ENCODE measurements at regions of chr1 and their contacts with region 1.

Region 1: DNA sequence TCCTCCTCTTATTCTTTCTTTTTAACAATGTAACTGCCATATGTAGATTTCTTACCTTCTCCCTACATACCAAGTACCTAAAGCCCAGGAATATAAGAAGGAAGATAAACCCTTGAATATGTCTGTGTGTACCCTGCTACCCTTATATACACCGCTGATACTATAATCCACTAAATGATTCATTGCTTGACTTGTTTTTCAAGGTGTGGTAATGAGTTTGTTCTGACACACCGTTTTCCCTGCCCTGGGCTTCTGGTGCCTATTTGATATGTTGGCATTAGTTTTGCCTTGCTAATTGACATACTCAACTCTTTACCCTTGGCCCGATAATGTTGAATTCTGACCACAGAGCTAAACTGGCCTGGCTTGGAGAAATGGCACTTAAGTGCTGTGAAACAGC is 64.3 kb downstream of the IL23R start:
- DNase-seq: no peak
- CTCF ChIP-seq: no peak

Region 2: DNA sequence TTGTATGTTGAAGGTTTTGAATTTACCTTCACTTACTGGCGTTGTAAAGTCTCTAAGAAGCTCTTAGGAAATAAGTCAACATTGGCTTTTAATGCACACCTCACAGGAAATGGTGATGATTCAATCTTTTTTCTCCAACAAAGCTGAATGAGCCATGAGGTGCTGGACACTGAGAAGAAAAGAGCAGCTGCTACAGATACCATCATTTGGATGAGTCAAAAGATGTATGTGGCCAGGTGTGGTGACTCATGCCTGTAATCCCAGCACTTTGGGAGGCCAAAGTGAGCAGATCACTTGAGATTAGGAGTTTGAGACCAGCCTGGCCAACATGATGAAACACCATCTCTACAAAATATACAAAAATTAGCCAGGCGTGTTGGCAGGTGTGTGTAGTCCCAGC is 67.6 kb before region 1 on chr1:
- in situ Hi-C with region 1: no loop called
- DNase-seq: no peak
- CTCF ChIP-seq: no peak

Region 3: DNA sequence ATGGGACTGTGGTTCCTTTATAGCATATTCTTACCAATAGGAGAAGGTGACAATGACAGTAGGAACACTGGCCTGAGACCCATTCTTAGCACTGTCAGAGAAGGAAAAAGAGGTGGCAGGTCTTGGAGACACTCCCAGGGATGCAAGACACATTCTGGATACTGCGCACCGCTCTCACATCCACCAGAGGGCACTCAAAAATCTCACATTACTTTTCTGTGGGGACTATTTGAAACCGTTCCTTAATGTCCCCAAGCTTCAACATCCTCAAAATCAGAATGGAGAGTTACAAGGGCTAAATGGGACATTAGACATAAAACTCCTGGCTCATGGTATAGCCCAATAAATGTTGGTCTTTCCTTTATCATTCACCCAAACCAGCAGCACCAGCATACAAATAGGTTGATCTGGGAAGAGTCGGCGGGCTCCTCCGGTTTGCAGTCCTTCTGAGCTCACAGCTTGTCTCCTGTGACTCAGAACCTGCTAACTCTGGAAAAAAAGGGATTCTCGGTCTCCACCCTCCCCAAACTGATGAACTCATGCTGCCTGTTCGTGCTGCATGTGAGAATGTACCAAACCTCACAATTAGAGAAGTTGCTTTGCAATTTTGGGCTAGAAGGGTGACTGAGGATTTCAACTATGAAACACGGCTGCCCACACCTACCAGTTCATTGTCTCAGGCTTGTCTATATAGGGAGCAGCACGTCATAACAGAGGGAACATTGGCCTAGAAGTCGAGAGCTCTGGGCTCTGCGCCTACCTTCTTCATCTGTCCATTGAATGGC is 117.3 kb after region 1 on chr1:
- in situ Hi-C with region 1: loop called (anchors 10 kb)
- DNase-seq: no peak
- CTCF ChIP-seq: peak; percentile 48

Region 4: GRCh38 chr1:67889953-67890567 is 659.5 kb after region 1 on chr1:
- in situ Hi-C with region 1: no loop called
- DNase-seq: no peak
- CTCF ChIP-seq: no peak

Measured in GM13976 (cell line).